Activated T-helper 1 cell treated with anti-CD3 and anti-CD28 coated beads, Interleukin-12 subunit alpha, Interleukin-12 subunit beta, Interleukin-2, Interleukin-4 antibody, amounts not matched to agents 30 ng/mL and 10 ng/mL and 1 ng/mL, durations not matched to agents 14 hours and 24 hours and 36 hours (primary cell): ENCODE measurements at regions of chr7 and their contacts with region 1.

Region 1: GRCh38 chr7:20310963-20311742 is 19.5 kb upstream of the ITGB8 start:
- DNase-seq: no peak
- H3K4me3 Mint-ChIP-seq: no peak overlapping the region
- H3K27ac Mint-ChIP-seq: no peak overlapping the region
- H3K4me1 Mint-ChIP-seq: no peaks in the 10 kb centered on the region
- H3K27me3 Mint-ChIP-seq: peaks cover 2% of the 10 kb centered on the region

Region 2: DNA sequence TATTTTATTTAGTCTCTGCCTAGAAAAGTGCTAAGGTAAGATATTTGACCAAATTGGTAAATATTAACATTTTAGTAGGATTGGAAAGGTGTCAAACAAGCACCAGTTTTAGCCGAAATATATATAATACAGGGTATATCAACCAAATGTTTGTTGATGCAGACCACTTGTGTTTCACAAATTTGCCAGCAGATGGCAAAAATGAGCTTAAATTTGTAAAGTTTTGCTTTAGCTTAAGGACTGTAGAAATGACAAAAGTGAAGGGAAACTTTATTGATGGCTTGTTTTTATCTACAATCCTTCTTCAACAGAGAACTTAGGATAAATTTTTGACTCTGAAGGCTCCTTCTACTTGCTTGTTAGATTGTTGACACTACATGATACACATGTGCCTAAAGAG is 597.5 kb before region 1 on chr7:
- intact Hi-C with region 1: loop called (anchors 2 kb)
- DNase-seq: no peak
- H3K4me3 Mint-ChIP-seq: no peak overlapping the region
- H3K27ac Mint-ChIP-seq: no peak overlapping the region
- H3K4me1 Mint-ChIP-seq: peaks cover 12% of the 10 kb centered on the region
- H3K27me3 Mint-ChIP-seq: peaks cover 9% of the 10 kb centered on the region

Region 3: GRCh38 chr7:19754521-19755116 is 556.5 kb before region 1 on chr7:
- intact Hi-C with region 1: loop called (anchors 10 kb)
- DNase-seq: no peak
- H3K4me3 Mint-ChIP-seq: no peak overlapping the region
- H3K27ac Mint-ChIP-seq: no peak overlapping the region
- H3K4me1 Mint-ChIP-seq: no peaks in the 10 kb centered on the region
- H3K27me3 Mint-ChIP-seq: no peaks in the 10 kb centered on the region

Region 4: DNA sequence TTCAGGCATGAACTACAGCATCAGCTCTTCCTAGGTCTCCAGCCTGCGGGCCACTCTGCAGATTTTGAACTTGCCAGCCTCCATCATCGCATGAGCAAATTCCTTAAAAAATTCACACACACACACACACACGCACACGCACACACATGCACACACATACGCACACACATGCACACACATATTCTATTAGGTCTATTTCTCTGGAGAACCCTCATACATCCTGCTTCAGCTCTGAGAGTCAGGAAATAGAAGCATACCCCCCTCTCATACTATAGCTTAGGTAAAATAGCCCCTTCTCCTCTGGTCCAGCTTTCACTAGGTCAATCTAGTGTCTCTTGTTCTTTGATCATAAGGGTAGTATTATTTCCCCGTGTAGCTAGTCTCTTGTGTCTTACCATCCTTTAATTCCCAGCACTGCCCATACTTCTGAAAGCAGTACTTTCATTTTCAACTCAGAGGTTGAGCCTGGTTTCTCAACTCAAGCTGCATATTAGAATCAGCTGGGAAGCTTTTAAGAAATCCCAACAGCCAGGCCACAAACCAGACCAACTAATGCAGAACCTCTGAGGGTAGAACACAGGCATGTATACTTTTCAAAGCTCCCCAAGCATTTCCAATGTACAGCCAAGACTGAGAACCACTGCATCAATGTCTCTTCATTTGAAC is 11.4 kb before region 1 on chr7:
- intact Hi-C with region 1: no loop called
- DNase-seq: no peak
- H3K4me3 Mint-ChIP-seq: no peak overlapping the region
- H3K27ac Mint-ChIP-seq: no peak overlapping the region
- H3K4me1 Mint-ChIP-seq: peaks cover 3% of the 10 kb centered on the region
- H3K27me3 Mint-ChIP-seq: peaks cover 4% of the 10 kb centered on the region